ENCODE measurements at regions of chr13 and their contacts with region 1.

Region 1: DNA sequence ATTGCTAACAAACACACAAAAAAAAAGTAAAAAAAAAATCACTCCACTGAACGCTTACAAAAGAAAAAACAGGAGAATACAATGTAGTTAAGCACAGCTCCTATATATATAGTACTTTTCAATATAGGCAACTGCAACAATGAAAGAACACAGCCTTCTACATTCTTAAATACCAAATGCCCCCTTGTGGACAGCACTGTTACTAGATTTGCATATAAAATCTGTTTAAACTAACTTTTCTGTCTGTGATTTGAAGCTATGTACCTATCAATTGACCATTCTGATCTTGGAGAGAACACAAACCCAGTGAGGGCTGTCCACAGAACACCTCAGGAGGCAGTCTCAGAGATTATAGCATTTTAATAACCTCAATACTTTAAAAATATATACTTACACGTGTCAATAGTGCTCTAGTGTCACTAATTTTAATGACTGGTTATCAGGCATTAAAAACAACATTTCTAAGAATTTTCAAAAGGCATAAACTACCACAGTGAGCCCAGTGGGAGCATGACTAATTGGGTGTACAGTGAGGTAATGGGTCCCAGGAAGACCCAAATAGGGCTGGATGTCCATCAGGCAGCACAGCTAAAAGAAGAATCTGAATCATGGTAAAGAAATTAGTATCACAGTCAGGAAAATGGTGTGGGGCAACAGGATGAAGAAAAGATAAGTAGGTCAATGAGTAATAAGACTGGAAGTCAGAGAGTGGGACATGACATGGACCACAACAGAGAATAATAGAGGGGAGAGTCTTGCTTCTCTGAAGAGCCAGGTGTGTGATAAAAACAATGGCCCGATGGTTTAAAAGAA is 22.2 kb downstream of the CCDC169 start:
- DNase-seq: no peak
- ATAC-seq: peak; percentile 69
- H3K4me3 ChIP-seq: no peak overlapping the region
- H3K27ac ChIP-seq: no peak overlapping the region
- H3K4me1 ChIP-seq: no peaks in the 10 kb centered on the region
- H3K27me3 ChIP-seq: no peaks in the 10 kb centered on the region
- CTCF ChIP-seq: peak; percentile 36 to 55 (median 45); a peak in 5 of 6 replicates
- EP300 ChIP-seq: no peak
- POLR2A ChIP-seq: no peak
- RAD21 ChIP-seq: peak; percentile 69

Region 2: GRCh38 chr13:35978603-35979316 is 296.6 kb before region 1 on chr13:
- CTCF ChIA-PET with region 1: interaction called, 122 read pairs
- POLR2A ChIA-PET with region 1: no interaction called
- RAD21 ChIA-PET with region 1: interaction called, 81 read pairs
- SMC1A ChIA-PET with region 1: interaction called, 59 read pairs
- in situ Hi-C with region 1: loop called (anchors 5 kb)
- intact Hi-C with region 1: loop called (anchors 1 kb)
- DNase-seq: no peak
- ATAC-seq: peak; percentile 56; the same call in 2 of the 3 replicates
- H3K4me3 ChIP-seq: no peak overlapping the region
- H3K27ac ChIP-seq: no peak overlapping the region
- H3K4me1 ChIP-seq: no peaks in the 10 kb centered on the region
- H3K27me3 ChIP-seq: no peaks in the 10 kb centered on the region
- CTCF ChIP-seq: peak; percentile 52 to 68 (median 62); a peak in 5 of 6 replicates
- EP300 ChIP-seq: no peak
- POLR2A ChIP-seq: no peak
- RAD21 ChIP-seq: peak; percentile 82

Region 3: DNA sequence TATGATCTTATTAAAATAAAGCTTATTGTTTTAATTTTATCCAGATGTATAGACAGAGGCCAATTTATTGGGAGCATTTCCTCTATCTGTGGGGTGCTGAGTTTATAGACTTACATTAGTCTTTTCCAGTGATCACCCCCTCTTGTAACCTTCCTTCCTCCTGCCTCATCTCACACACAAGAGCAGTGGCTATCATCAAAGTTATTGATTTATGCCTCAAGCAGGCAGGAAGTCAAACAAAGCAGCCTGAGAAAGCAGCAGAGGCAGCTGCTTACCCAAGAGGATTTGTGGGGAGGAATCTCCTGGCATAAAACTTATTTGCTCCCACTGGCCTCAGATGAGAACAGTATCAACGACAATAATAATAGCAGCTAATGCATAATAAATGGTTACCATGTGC is 117.9 kb before region 1 on chr13:
- CTCF ChIA-PET with region 1: no interaction called
- POLR2A ChIA-PET with region 1: no interaction called
- RAD21 ChIA-PET with region 1: no interaction called
- SMC1A ChIA-PET with region 1: no interaction called
- in situ Hi-C with region 1: no loop called
- intact Hi-C with region 1: no loop called
- DNase-seq: no peak
- ATAC-seq: no peak
- H3K4me3 ChIP-seq: no peak overlapping the region
- H3K27ac ChIP-seq: no peak overlapping the region
- H3K4me1 ChIP-seq: no peaks in the 10 kb centered on the region
- H3K27me3 ChIP-seq: no peaks in the 10 kb centered on the region
- CTCF ChIP-seq: no peak
- EP300 ChIP-seq: no peak
- POLR2A ChIP-seq: no peak
- RAD21 ChIP-seq: no peak

Region 4: DNA sequence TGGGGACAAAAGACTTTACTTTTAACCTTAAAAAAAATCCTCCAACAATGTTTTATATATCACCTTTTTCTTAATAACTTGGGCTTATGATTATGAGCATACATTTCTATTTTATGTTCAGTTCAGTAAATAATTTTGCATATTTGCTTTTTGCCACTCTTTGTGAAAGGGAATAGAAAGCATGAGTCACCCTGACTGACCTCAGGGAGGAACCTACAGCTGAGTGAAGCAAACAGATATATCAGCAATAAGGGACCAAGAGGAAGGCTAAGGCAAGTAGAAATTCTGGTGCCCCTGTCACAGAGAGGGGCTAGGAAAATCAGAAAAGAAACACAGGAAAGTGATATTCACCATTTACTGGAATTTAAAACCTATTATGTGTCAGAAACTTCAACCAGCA is 23.9 kb before region 1 on chr13:
- CTCF ChIA-PET with region 1: interaction called, 17 read pairs
- POLR2A ChIA-PET with region 1: no interaction called
- RAD21 ChIA-PET with region 1: interaction called, 6 read pairs
- SMC1A ChIA-PET with region 1: interaction called, 7 read pairs
- in situ Hi-C with region 1: no loop called
- intact Hi-C with region 1: no loop called
- DNase-seq: no peak
- ATAC-seq: peak; percentile 84
- H3K4me3 ChIP-seq: no peak overlapping the region
- H3K27ac ChIP-seq: no peak overlapping the region
- H3K4me1 ChIP-seq: no peaks in the 10 kb centered on the region
- H3K27me3 ChIP-seq: no peaks in the 10 kb centered on the region
- CTCF ChIP-seq: no peak
- EP300 ChIP-seq: no peak
- POLR2A ChIP-seq: no peak
- RAD21 ChIP-seq: no peak

Region 5: DNA sequence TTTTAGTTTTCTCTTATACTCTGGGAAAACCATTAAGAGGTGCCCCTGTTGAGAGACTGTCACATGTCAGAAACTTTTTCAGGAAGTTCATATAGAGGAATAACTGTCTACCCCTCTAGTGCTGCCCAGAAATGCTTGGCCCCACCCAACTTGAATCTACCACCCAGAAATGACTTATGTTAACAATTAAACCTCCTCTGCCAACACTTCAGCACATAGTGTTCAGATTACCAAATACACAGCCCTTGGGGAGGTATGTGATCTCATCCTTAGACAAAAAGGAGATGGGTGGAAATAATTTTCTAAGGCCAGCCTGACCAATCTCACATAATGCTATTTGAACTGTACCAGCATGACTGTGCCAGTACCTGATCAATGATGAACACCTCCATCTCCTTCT is 13.4 kb before region 1 on chr13:
- CTCF ChIA-PET with region 1: interaction called, 20 read pairs
- POLR2A ChIA-PET with region 1: interaction called, 3 read pairs
- RAD21 ChIA-PET with region 1: interaction called, 8 read pairs
- SMC1A ChIA-PET with region 1: interaction called, 6 read pairs
- in situ Hi-C with region 1: no loop called
- intact Hi-C with region 1: no loop called
- DNase-seq: no peak
- ATAC-seq: no peak
- H3K4me3 ChIP-seq: no peak overlapping the region
- H3K27ac ChIP-seq: no peak overlapping the region
- H3K4me1 ChIP-seq: no peaks in the 10 kb centered on the region
- H3K27me3 ChIP-seq: no peaks in the 10 kb centered on the region
- CTCF ChIP-seq: no peak
- EP300 ChIP-seq: no peak
- POLR2A ChIP-seq: no peak
- RAD21 ChIP-seq: no peak

Measured in GM12878 (cell line).